Mucosa of descending colon (tissue), 3 donors: ENCODE measurements at regions of chr20 and their contacts with region 1.

Region 1: DNA sequence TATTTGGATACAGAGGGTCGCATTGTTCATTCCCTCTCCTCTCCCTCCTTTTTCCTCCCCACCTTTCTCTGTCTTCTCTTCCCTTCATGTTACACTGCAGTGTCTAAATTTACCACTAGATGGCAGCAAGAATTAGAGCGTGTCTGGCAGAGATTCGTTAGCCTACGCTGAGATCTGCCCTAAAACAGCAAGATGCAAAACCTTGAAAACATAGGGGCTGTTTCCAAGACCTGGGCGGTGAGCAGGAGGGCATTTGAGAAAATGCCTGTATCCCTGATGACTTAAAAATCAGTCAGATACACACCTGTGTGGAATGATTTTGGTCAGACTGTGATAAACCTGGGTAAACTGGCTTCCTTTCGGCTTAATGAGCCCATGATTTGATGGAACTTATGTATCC is 101.5 kb upstream of the ISM1 start:
- DNase-seq: peak in 1 of 3 donors; percentile 58
- ATAC-seq: peak; percentile 74
- H3K4me3 ChIP-seq: no peak overlapping the region
- H3K4me1 ChIP-seq: no peaks in the 10 kb centered on the region
- CTCF ChIP-seq: peak; percentile 71

Region 2: DNA sequence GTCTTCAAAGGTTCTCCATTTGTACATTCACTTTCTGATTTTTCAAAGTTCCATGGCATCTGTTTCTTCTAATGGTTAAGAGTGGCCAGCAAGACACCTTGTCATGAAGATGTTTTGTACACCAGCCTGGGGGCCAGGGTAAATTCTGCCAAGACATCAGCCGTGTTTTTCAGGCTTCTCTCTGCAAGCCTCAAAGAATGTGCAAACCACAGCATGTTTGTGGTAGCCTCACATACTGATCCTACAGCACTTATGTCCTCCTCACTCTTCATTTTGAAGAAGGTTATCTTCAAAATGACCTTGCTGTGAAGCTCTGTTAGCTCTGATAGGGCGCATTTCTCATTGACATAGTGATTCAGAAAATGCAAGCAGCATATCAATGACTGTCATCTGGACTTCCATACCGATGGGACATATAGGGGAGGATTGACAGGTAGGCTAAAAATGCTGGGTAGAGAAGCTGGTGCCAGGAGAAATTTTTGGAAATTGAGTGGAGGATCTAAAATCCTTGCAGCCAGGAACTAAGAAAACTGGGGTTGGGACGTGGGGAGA is 170.1 kb before region 1 on chr20:
- intact Hi-C with region 1: no loop called
- DNase-seq: no peak
- ATAC-seq: no peak
- H3K4me3 ChIP-seq: no peak overlapping the region
- H3K4me1 ChIP-seq: no peaks in the 10 kb centered on the region
- CTCF ChIP-seq: no peak

Region 3: DNA sequence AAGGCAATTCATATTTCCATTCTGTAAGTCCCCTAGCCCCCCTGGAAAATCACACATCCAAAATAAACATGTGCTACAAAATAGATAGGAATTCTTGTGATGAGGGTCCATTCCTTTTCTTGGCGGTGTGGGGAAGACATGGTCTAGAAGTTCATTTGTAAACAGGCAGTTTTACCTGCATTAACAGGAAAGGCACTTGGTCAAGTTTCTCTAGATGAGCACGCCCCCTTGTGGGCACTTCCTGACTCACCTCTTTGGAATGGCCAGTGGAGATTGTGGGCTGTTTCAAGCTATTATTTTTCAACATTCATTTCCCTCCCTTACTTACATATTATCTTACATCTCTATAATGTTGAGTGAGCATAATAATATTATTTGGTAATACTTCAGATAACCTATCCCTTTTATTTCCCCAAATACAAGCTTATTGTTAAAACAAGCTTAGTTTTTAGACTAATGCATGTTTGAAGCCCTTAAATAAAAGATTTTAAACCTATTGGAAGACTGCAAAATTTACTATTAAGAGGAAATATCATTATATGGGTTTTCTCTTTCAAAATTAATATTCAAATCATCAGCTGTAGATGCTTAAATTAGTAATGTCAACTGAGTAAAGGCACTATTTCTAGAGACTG is 427.0 kb after region 1 on chr20:
- intact Hi-C with region 1: loop called in 1 of 2 experiments (anchors 10 kb)
- DNase-seq: peak in 2 of 3 donors; percentile 84 to 96
- ATAC-seq: peak; percentile 83
- H3K4me3 ChIP-seq: no peak overlapping the region
- H3K4me1 ChIP-seq: no peaks in the 10 kb centered on the region
- CTCF ChIP-seq: peak; percentile 65

Region 4: GRCh38 chr20:13771853-13772453 is 652.4 kb after region 1 on chr20:
- intact Hi-C with region 1: loop called in 1 of 2 experiments (anchors 10 kb)
- DNase-seq: no peak
- ATAC-seq: no peak
- H3K4me3 ChIP-seq: no peak overlapping the region
- H3K4me1 ChIP-seq: no peaks in the 10 kb centered on the region
- CTCF ChIP-seq: no peak